ENCODE measurements at regions of chr12 and their contacts with region 1.

Region 1: GRCh38 chr12:1099158-1099557 is 108.1 kb downstream of the ERC1 start:
- DNase-seq: peak; percentile 68
- H3K4me3 Mint-ChIP-seq: no peak overlapping the region
- H3K27ac Mint-ChIP-seq: no peak overlapping the region
- H3K4me1 Mint-ChIP-seq: peaks cover 58% of the 10 kb centered on the region
- H3K27me3 Mint-ChIP-seq: no peaks in the 10 kb centered on the region

Region 2: DNA sequence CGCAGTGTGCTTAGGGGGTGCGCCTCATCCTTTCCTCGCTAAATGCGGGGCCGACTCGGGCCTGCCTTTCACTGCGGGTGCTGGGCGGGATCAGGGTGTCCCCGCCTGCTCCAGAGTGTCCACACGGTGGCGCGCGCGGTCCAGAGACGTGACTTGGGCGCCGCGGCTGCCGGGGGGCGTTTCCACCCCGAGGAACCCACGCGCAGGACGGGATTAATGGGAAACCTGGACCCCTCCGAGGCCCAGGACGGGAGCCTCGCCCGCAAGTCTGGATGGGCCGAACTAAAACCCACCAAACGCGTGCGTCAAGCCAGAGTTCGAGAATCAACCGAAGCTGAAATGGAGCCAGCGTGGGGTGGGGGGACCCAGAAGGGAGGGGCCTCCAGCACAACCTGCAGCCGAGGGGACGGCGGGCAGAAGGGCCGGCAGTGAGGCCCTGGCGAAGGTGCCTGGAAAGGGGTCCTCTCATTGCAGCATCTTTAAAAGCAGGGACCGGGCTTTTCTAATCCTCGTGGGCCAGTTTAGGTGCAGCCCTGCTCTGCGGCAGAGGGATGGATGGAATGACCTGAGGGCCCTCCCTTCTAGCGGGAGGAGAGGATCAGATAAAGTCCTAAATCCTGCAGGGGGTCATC is 529.2 kb before region 1 on chr12:
- CTCF ChIA-PET with region 1: no interaction called
- intact Hi-C with region 1: loop called (anchors 5 kb)
- DNase-seq: peak; percentile 91
- H3K4me3 Mint-ChIP-seq: peak overlapping the region; percentile 80
- H3K27ac Mint-ChIP-seq: no peak overlapping the region
- H3K4me1 Mint-ChIP-seq: peaks cover 58% of the 10 kb centered on the region
- H3K27me3 Mint-ChIP-seq: no peaks in the 10 kb centered on the region

Region 3: DNA sequence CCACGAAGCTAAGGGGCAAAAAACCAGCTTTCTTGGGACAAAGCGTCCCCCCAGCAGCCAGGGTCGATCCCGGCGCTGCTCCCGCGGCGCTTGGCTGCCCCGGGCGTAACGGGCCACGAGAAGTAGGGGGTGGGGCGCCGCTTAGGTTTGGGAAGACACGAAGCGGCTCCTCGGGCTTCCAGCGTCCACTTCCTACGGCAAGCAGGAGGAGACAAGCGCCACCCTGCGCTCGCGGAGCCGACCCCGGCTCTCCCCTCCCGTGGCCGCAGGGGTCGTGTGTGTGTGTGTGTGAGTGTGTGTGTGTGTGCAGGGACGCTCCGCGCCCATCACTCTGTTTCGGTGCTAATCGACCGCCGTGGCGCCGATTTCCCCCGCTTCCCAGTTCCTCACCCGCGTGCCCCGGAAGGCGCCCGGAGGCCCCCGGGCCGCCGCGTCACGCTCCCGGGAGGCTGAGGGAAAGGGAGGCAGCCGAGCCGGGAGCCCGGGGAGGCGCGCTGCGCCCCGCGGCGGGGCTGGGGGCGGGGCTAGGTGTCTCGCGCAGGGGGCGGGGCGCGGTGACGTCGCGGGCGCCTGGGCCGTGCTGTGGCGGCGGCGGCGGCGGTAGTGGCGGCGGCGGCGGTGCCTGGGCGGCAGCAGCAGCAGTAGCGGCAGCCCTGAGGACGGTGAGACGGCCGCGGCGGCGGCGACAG is 108.4 kb before region 1 on chr12 and contains the start of gene ERC1:
- CTCF ChIA-PET with region 1: no interaction called
- intact Hi-C with region 1: loop called (anchors 5 kb)
- DNase-seq: peak; percentile 83
- H3K4me3 Mint-ChIP-seq: peak within 1 kb of the TSS; percentile 86
- H3K27ac Mint-ChIP-seq: peak within 1 kb of the TSS; percentile 77
- H3K4me1 Mint-ChIP-seq: peaks cover 32% of the 10 kb centered on the region
- H3K27me3 Mint-ChIP-seq: no peaks in the 10 kb centered on the region
- total RNA-seq, gene ERC1: 17.4 to 20.7 TPM

Region 4: GRCh38 chr12:1130164-1130563 is 31.0 kb after region 1 on chr12:
- CTCF ChIA-PET with region 1: no interaction called
- intact Hi-C with region 1: loop called (anchors 1 kb)
- DNase-seq: no peak
- H3K4me3 Mint-ChIP-seq: no peak overlapping the region
- H3K27ac Mint-ChIP-seq: no peak overlapping the region
- H3K4me1 Mint-ChIP-seq: peaks cover 24% of the 10 kb centered on the region
- H3K27me3 Mint-ChIP-seq: no peaks in the 10 kb centered on the region

Measured in activated naive CD4-positive, alpha-beta T cell treated with anti-CD3 and anti-CD28 coated beads for 36 hours (primary cell).